B cell (primary cell): ENCODE measurements at regions of chr11 and their contacts with region 1.

Region 1: GRCh38 chr11:46346886-46347636 is at the start of gene DGKZ:
- DNase-seq: peak; percentile 96
- ATAC-seq: peak; percentile 94
- H3K4me3 ChIP-seq: peak within 1 kb of the TSS; percentile 58 to 88 (median 78)
- H3K4me3 Mint-ChIP-seq: peak within 1 kb of the TSS; percentile 91
- H3K27ac ChIP-seq: peak within 1 kb of the TSS in 1 of 2 donors; percentile 64
- H3K27ac Mint-ChIP-seq: peak within 1 kb of the TSS; percentile 83
- H3K4me1 ChIP-seq: peaks cover 38 to 46% of the 10 kb centered on the region in 2 donors
- H3K4me1 Mint-ChIP-seq: peaks cover 53% of the 10 kb centered on the region
- H3K27me3 ChIP-seq: peaks cover 0 to 5% (median 0%) of the 10 kb centered on the region in 4 experiments
- H3K27me3 Mint-ChIP-seq: no peaks in the 10 kb centered on the region
- CTCF ChIP-seq: peak; percentile 73
- total RNA-seq, gene DGKZ: 56.6 and 60.9 TPM in 2 replicates

Region 2: GRCh38 chr11:45804761-45805304 is 542.2 kb before region 1 on chr11 and contains the start of gene SLC35C1:
- CTCF ChIA-PET with region 1: no interaction called
- POLR2A ChIA-PET with region 1: no interaction called
- intact Hi-C with region 1: loop called (anchors 2 kb)
- DNase-seq: peak; percentile 95
- ATAC-seq: peak; percentile 96
- H3K4me3 ChIP-seq: peak within 1 kb of the TSS; percentile 42 to 96 (median 92)
- H3K4me3 Mint-ChIP-seq: peak within 1 kb of the TSS; percentile 94
- H3K27ac ChIP-seq: peak within 1 kb of the TSS; percentile 62 to 67
- H3K27ac Mint-ChIP-seq: peak within 1 kb of the TSS; percentile 91
- H3K4me1 ChIP-seq: peaks cover 27 to 35% of the 10 kb centered on the region in 2 donors
- H3K4me1 Mint-ChIP-seq: peaks cover 41% of the 10 kb centered on the region
- H3K27me3 ChIP-seq: no peaks in the 10 kb centered on the region
- H3K27me3 Mint-ChIP-seq: no peaks in the 10 kb centered on the region
- CTCF ChIP-seq: no peak
- total RNA-seq, gene SLC35C1: 12.5 and 13.8 TPM in 2 replicates

Region 3: GRCh38 chr11:46238967-46239800 is 107.9 kb before region 1 on chr11:
- CTCF ChIA-PET with region 1: interaction called, 5 read pairs
- POLR2A ChIA-PET with region 1: no interaction called
- intact Hi-C with region 1: loop called (anchors 1 kb)
- DNase-seq: peak; percentile 86
- ATAC-seq: peak; percentile 81
- H3K4me3 ChIP-seq: peak overlapping the region in 2 of 5 experiments; percentile 25
- H3K4me3 Mint-ChIP-seq: peak overlapping the region; percentile 75
- H3K27ac ChIP-seq: no peak overlapping the region
- H3K27ac Mint-ChIP-seq: no peak overlapping the region
- H3K4me1 ChIP-seq: peaks cover 30 to 31% of the 10 kb centered on the region in 2 donors
- H3K4me1 Mint-ChIP-seq: peaks cover 35% of the 10 kb centered on the region
- H3K27me3 ChIP-seq: peaks cover 0 to 48% (median 26%) of the 10 kb centered on the region in 4 experiments
- H3K27me3 Mint-ChIP-seq: peaks cover 56% of the 10 kb centered on the region
- CTCF ChIP-seq: peak; percentile 98

Region 4: DNA sequence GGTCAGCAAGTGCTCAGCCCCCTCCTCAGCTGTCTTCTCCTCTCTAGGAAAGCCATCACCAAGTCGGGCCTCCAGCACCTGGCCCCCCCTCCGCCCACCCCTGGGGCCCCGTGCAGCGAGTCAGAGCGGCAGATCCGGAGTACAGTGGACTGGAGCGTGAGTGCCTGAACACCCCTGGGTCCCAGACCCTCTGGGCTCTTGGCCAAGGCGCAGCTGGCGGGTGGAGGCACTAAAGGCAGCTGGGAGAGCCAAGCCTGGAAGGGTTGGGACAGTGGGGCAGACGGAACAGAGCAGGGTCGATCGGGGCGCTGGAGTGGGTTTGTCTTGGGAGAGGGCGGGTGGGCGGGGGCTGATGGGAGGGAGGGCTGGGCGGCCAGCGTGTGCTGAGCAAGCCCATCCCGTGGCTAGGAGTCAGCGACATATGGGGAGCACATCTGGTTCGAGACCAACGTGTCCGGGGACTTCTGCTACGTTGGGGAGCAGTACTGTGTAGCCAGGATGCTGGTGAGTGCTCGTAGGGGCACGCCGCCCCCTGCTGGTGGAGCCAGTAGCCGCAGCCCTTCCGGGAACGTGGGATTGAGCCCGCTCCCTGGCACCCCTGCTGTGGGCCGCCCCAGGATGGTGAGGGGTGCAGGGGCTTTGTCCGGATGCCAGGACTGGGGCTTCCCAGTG is 20.3 kb after region 1 on chr11:
- CTCF ChIA-PET with region 1: interaction called, 18 read pairs
- POLR2A ChIA-PET with region 1: no interaction called
- intact Hi-C with region 1: loop called (anchors 1 kb)
- DNase-seq: peak; percentile 74
- ATAC-seq: peak; percentile 75
- H3K4me3 ChIP-seq: no peak overlapping the region
- H3K4me3 Mint-ChIP-seq: no peak overlapping the region
- H3K27ac ChIP-seq: no peak overlapping the region
- H3K27ac Mint-ChIP-seq: no peak overlapping the region
- H3K4me1 ChIP-seq: peaks cover 2 to 13% of the 10 kb centered on the region in 2 donors
- H3K4me1 Mint-ChIP-seq: peaks cover 13% of the 10 kb centered on the region
- H3K27me3 ChIP-seq: no peaks in the 10 kb centered on the region
- H3K27me3 Mint-ChIP-seq: no peaks in the 10 kb centered on the region
- CTCF ChIP-seq: peak; percentile 87

Region 5: GRCh38 chr11:46380340-46381047 is 33.4 kb after region 1 on chr11:
- CTCF ChIA-PET with region 1: interaction called, 3 read pairs
- POLR2A ChIA-PET with region 1: no interaction called
- intact Hi-C with region 1: loop called (anchors 5 kb)
- DNase-seq: peak; percentile 65
- ATAC-seq: peak; percentile 61
- H3K4me3 ChIP-seq: peak overlapping the region; percentile 34 to 84 (median 69)
- H3K4me3 Mint-ChIP-seq: peak overlapping the region; percentile 85
- H3K27ac ChIP-seq: peak overlapping the region in 1 of 2 donors; percentile 43
- H3K27ac Mint-ChIP-seq: peak overlapping the region; percentile 56
- H3K4me1 ChIP-seq: peaks cover 14 to 15% of the 10 kb centered on the region in 2 donors
- H3K4me1 Mint-ChIP-seq: peaks cover 12% of the 10 kb centered on the region
- H3K27me3 ChIP-seq: peaks cover 0 to 38% (median 20%) of the 10 kb centered on the region in 4 experiments
- H3K27me3 Mint-ChIP-seq: peaks cover 24% of the 10 kb centered on the region
- CTCF ChIP-seq: no peak

Region 6: GRCh38 chr11:46529095-46529905 is 182.2 kb after region 1 on chr11:
- CTCF ChIA-PET with region 1: no interaction called
- POLR2A ChIA-PET with region 1: no interaction called
- intact Hi-C with region 1: loop called (anchors 2 kb)
- DNase-seq: peak; percentile 79
- ATAC-seq: peak; percentile 100
- H3K4me3 ChIP-seq: no peak overlapping the region
- H3K4me3 Mint-ChIP-seq: no peak overlapping the region
- H3K27ac ChIP-seq: no peak overlapping the region
- H3K27ac Mint-ChIP-seq: peak overlapping the region; percentile 46
- H3K4me1 ChIP-seq: peaks cover 4 to 5% of the 10 kb centered on the region in 2 donors
- H3K4me1 Mint-ChIP-seq: peaks cover 21% of the 10 kb centered on the region
- H3K27me3 ChIP-seq: no peaks in the 10 kb centered on the region
- H3K27me3 Mint-ChIP-seq: no peaks in the 10 kb centered on the region
- CTCF ChIP-seq: peak; percentile 96

Region 7: GRCh38 chr11:46616998-46617675 is 270.1 kb after region 1 on chr11 and contains the starts of genes ATG13 and HARBI1:
- CTCF ChIA-PET with region 1: no interaction called
- POLR2A ChIA-PET with region 1: interaction called, 6 read pairs
- intact Hi-C with region 1: loop called (anchors 1 kb)
- DNase-seq: peak; percentile 96
- ATAC-seq: peak; percentile 94
- H3K4me3 ChIP-seq: peak within 1 kb of the TSS; percentile 84 to 100 (median 100)
- H3K4me3 Mint-ChIP-seq: peak within 1 kb of the TSS; percentile 99
- H3K27ac ChIP-seq: peak within 1 kb of the TSS; percentile 99 to 100
- H3K27ac Mint-ChIP-seq: peak within 1 kb of the TSS; percentile 100
- H3K4me1 ChIP-seq: peaks cover 17 to 22% of the 10 kb centered on the region in 2 donors
- H3K4me1 Mint-ChIP-seq: peaks cover 30% of the 10 kb centered on the region
- H3K27me3 ChIP-seq: no peaks in the 10 kb centered on the region
- H3K27me3 Mint-ChIP-seq: no peaks in the 10 kb centered on the region
- CTCF ChIP-seq: no peak
- total RNA-seq, gene ATG13: 88.8 and 92.8 TPM in 2 replicates
- total RNA-seq, gene HARBI1: 6.7 and 8.0 TPM in 2 replicates